ENCODE measurements at regions of chr19 and their contacts with region 1.

Region 1: DNA sequence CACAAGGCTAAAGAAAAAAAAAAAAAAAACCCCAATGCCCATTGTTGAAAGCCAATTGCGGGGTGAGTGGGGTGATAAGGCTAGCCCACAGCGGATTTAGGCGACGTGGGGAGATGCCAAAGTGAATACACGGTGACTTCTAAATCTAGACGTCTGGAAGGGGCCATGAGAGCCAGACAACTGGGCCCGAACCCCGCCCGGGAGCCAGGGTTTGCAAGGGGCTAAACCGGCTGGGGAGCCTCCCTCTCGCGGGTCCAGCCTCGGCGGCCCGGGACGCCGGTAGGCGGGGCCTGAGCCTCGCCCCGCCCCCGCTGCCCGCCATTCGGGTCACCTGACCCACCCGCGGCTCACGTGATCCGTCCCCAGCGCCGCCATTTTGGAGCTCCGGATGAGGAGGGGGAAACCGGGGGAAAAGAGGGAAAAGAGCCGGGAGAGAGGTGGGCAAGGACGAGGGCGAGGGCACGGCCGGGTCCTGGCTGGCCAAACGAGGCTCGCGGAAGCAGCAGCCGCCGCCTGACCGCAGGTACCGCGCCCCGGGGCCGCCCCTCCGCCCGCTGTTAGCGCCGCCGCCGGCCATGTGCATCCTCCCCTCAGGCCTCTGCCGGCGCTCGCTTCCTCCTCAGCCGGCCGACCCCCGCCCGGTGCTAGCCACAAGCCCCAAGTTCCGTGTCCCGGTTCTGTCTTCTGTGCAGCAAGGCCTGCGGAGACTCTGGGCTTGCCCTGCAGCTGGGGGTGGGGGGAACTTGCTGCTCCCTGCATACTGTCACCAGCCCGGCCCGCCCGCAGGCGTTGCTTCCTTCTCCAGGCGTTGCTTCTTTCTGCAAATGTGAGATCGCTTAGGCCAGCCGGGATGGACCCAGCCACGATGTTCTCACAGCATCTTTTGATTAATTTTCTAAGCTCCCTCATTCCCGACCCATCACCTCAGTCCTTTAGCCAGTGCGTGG is at the start of gene ZNF507:
- DNase-seq: peak; percentile 59
- ATAC-seq: peak; percentile 82
- H3K4me3 ChIP-seq: peak within 1 kb of the TSS; percentile 84 to 96 (median 94)
- H3K27ac ChIP-seq: peak within 1 kb of the TSS; percentile 76
- H3K4me1 ChIP-seq: peaks cover 53% of the 10 kb centered on the region
- H3K27me3 ChIP-seq: no peaks in the 10 kb centered on the region; a peak in 1 of 5 replicates
- CTCF ChIP-seq: peak; percentile 13; the same call in 1 of the 2 replicates
- EP300 ChIP-seq: no peak
- POLR2A ChIP-seq: peak; percentile 47 to 58; a peak in 3 of 4 replicates
- RAD21 ChIP-seq: no peak; the same call in 1 of the 2 replicates
- total RNA-seq, gene ZNF507: 7.3 and 16.4 TPM in 2 replicates

Region 2: GRCh38 chr19:32201636-32202051 is 143.9 kb before region 1 on chr19:
- CTCF ChIA-PET with region 1: no interaction called
- POLR2A ChIA-PET with region 1: no interaction called
- in situ Hi-C with region 1: no loop called
- intact Hi-C with region 1: no loop called
- DNase-seq: no peak
- ATAC-seq: no peak
- H3K4me3 ChIP-seq: no peak overlapping the region
- H3K27ac ChIP-seq: no peak overlapping the region
- H3K4me1 ChIP-seq: no peaks in the 10 kb centered on the region
- H3K27me3 ChIP-seq: peaks cover 0 to 1% of the 10 kb centered on the region in 2 experiments; a peak in 3 of 5 replicates
- CTCF ChIP-seq: no peak
- EP300 ChIP-seq: no peak
- POLR2A ChIP-seq: no peak
- RAD21 ChIP-seq: no peak

Region 3: DNA sequence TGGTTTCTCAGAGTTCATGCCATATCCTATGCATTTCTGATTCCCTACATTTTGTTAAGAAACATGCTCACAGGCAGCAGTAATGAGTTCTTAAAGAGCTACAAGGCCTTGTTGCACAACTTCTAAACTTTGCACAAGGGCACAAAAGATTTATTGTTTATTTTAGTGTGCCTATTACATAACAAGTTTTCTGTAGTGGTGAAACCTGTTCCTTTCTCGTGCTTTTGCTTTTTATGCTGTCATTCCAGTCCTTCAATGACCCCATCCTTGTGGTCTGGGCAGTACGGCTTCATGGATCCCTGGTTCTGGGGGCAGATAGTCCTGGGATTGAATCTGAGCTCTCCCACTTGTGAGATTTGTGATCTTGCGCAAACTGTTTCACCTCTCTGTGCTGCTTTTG is 17.7 kb after region 1 on chr19:
- CTCF ChIA-PET with region 1: interaction called, 5 read pairs
- POLR2A ChIA-PET with region 1: interaction called, 22 read pairs
- in situ Hi-C with region 1: no loop called
- intact Hi-C with region 1: no loop called
- DNase-seq: peak; percentile 89
- ATAC-seq: peak; percentile 82
- H3K4me3 ChIP-seq: no peak overlapping the region; a peak in 1 of 6 replicates
- H3K27ac ChIP-seq: peak overlapping the region; percentile 70
- H3K4me1 ChIP-seq: peaks cover 50% of the 10 kb centered on the region
- H3K27me3 ChIP-seq: no peaks in the 10 kb centered on the region
- CTCF ChIP-seq: no peak
- EP300 ChIP-seq: peak; percentile 76 to 78; a peak in 3 of 4 replicates
- POLR2A ChIP-seq: no peak
- RAD21 ChIP-seq: no peak

Measured in HepG2 (cell line).